Natural killer cell (primary cell): ENCODE measurements at regions of chr5 and their contacts with region 1.

Region 1: DNA sequence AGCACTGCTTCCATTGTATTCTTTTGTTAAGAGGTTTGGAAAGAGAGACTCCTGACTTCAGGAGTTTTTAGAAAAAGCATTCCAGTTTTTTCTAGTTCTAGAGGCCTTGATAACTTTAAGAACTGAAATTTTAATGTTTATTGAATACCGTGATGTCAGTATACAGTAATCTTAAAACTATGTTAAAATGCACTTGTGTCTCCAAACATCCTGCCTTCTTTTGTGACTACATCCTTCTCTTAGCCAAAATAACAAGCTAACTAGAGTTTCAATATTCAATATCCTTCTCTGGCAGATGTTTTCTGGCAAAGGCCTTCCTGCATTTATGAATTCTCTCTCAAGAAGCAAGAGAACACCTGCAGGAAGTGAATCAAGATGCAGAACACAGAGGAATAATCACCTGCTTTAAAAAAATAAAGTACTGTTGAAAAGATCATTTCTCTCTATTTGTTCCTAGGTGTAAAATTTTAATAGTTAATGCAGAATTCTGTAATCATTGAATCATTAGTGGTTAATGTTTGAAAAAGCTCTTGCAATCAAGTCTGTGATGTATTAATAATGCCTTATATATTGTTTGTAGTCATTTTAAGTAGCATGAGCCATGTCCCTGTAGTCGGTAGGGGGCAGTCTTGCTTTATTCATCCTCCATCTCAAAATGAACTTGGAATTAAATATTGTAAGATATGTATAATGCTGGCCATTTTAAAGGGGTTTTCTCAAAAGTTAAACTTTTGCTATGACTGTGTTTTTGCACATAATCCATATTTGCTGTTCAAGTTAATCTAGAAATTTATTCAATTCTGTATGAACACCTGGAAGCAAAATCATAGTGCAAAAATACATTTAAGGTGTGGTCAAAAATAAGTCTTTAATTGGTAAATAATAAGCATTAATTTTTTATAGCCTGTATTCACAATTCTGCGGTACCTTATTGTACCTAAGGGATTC is 43.1 kb downstream of the NDFIP1 start:
- DNase-seq: peak; percentile 27 to 85
- ATAC-seq: peak; percentile 72 to 77 (median 75)
- H3K4me3 ChIP-seq: no peak overlapping the region
- H3K4me3 Mint-ChIP-seq: no peak overlapping the region
- H3K27ac ChIP-seq: no peak overlapping the region
- H3K27ac Mint-ChIP-seq: no peak overlapping the region
- H3K4me1 ChIP-seq: no peaks in the 10 kb centered on the region
- H3K4me1 Mint-ChIP-seq: no peaks in the 10 kb centered on the region
- H3K27me3 ChIP-seq: no peaks in the 10 kb centered on the region
- H3K27me3 Mint-ChIP-seq: no peaks in the 10 kb centered on the region
- CTCF ChIP-seq: peak; percentile 96

Region 2: GRCh38 chr5:142548739-142549275 is 397.1 kb after region 1 on chr5:
- intact Hi-C with region 1: loop called (anchors 1 kb)
- DNase-seq: peak in 1 of 2 donors; percentile 49
- ATAC-seq: peak; percentile 21 to 55 (median 55)
- H3K4me3 ChIP-seq: no peak overlapping the region
- H3K4me3 Mint-ChIP-seq: no peak overlapping the region
- H3K27ac ChIP-seq: no peak overlapping the region
- H3K27ac Mint-ChIP-seq: no peak overlapping the region
- H3K4me1 ChIP-seq: no peaks in the 10 kb centered on the region
- H3K4me1 Mint-ChIP-seq: peaks cover 0 to 7% of the 10 kb centered on the region in 2 donors
- H3K27me3 ChIP-seq: peaks cover 21% of the 10 kb centered on the region
- H3K27me3 Mint-ChIP-seq: peaks cover 36 to 38% of the 10 kb centered on the region in 2 donors
- CTCF ChIP-seq: peak; percentile 55

Region 3: DNA sequence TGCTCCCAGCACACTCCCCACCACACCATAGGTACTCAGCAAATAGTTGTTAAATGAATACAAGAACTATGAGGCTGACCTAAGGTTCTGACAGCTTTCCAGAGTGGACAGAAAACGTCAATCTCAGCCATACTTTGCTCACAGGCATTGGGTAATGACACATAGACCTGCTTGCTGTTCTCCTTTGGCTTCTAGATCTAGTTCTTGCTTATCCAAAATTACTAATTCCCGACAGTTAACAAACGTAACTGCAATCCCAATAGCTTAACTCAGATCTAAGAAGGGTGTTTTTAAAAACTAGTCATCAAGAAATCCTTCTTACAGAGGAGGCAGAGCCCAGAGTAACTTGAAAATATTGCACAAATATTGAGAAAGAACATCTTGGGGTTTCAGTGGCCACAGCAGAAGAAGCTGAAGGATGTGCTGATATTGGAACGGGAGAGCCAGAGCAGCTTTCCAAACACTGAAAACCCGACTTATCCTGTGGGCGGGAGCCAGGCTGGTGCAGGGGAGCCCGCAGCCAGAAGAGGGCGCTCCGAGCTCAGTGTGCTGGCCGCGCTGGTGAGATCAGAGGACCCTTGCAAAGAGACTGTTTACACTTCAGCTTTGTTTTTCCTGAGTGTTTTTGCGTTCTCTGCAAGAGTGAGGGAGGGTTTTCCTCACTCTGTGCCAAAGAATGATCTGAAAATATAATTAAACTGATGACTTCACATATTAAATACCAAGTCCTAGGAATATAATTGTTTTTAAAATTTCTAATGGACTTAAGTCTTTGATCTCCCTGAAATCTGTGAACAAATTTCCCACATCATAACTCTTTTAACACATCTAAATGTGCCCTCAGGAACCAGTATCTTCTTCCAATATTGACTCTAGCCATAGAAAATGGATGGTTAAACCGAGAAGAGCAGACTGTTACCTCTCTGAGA is 503.9 kb after region 1 on chr5:
- intact Hi-C with region 1: loop called (anchors 1 kb)
- DNase-seq: peak; percentile 61 to 79
- ATAC-seq: peak; percentile 78 to 97 (median 92)
- H3K4me3 ChIP-seq: no peak overlapping the region
- H3K4me3 Mint-ChIP-seq: no peak overlapping the region
- H3K27ac ChIP-seq: no peak overlapping the region
- H3K27ac Mint-ChIP-seq: no peak overlapping the region
- H3K4me1 ChIP-seq: no peaks in the 10 kb centered on the region
- H3K4me1 Mint-ChIP-seq: no peaks in the 10 kb centered on the region
- H3K27me3 ChIP-seq: peaks cover 2% of the 10 kb centered on the region
- H3K27me3 Mint-ChIP-seq: peaks cover 12 to 17% of the 10 kb centered on the region in 2 donors
- CTCF ChIP-seq: peak; percentile 87

Region 4: DNA sequence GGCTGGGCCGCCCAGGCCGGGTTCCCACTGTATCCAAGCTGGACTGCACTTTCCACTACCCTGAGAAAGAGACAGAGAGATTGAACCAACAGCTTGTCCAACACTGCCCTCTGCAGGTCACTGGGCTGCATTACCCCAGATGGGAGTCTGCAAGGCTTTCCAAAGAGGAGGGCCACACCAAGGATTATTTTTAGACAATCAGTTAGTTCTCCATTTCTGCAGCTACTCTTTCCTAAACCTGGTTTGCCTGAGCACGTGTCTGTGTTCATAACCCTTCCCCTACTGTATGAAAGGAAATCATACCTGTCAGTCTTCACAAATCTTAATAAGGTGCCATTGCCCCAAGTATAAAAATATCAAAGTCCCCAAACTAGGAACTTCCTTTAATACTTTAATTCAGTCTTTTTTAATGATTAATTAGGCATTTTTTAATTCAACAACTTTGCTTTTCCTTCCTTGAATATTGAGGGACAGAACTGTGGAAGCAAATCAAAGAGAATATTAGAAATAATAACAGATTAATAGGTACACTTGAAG is 547.5 kb after region 1 on chr5:
- intact Hi-C with region 1: loop called (anchors 1 kb)
- DNase-seq: peak; percentile 64 to 85
- ATAC-seq: peak; percentile 88 to 97 (median 88)
- H3K4me3 ChIP-seq: no peak overlapping the region
- H3K4me3 Mint-ChIP-seq: no peak overlapping the region
- H3K27ac ChIP-seq: no peak overlapping the region
- H3K27ac Mint-ChIP-seq: no peak overlapping the region
- H3K4me1 ChIP-seq: no peaks in the 10 kb centered on the region
- H3K4me1 Mint-ChIP-seq: no peaks in the 10 kb centered on the region
- H3K27me3 ChIP-seq: no peaks in the 10 kb centered on the region
- H3K27me3 Mint-ChIP-seq: peaks cover 0 to 17% of the 10 kb centered on the region in 2 donors
- CTCF ChIP-seq: peak; percentile 90

Region 5: GRCh38 chr5:142888469-142889085 is 736.9 kb after region 1 on chr5:
- intact Hi-C with region 1: loop called (anchors 10 kb)
- DNase-seq: peak in 1 of 2 donors; percentile 60
- ATAC-seq: peak in 2 of 3 donors; percentile 54 to 62
- H3K4me3 ChIP-seq: no peak overlapping the region
- H3K4me3 Mint-ChIP-seq: no peak overlapping the region
- H3K27ac ChIP-seq: no peak overlapping the region
- H3K27ac Mint-ChIP-seq: no peak overlapping the region
- H3K4me1 ChIP-seq: peaks cover 2% of the 10 kb centered on the region
- H3K4me1 Mint-ChIP-seq: peaks cover 53 to 58% of the 10 kb centered on the region in 2 donors
- H3K27me3 ChIP-seq: no peaks in the 10 kb centered on the region
- H3K27me3 Mint-ChIP-seq: no peaks in the 10 kb centered on the region
- CTCF ChIP-seq: peak; percentile 79